ENCODE measurements at regions of chr14 and their contacts with region 1.

Region 1: DNA sequence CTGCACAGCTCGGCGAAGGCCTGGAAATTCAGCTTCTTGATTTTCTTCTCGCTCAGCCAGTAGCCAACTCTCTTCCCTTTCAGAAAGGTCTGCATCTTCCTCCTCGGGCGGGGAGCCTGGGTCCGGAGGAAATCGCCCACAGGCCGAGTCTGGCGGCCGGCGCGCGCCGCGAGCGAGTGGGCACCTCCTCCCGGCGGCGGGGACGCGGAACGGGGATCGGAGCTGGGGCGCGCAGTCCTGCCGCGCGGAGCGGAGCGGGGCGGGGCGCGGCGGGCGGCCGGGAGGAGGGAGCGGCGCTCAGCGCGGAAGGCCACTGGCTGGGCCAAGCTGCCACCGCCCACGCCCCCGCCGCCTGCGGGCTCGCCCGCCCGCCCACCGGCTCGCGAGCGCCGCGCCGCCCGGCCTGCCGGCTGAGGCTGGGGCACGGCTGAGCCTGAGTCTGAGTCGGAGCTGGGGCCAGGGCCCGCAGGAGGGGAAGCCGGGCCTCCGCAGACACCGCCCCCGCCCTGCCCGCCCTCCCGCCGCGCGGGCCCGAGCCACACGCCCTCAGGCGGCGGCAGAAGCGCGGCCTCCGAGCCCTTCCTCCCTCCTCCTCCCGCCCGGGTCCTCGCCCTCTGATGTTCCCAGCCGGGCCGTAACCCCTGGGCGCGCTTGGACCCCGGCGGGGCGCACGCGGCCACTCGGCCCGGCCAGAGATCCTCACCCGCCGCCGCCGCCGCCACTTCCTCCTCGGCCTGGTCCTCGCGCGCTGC is 480 bp downstream of the ITPK1 start:
- DNase-seq: peak; percentile 79 to 90 (median 87)
- H3K4me3 ChIP-seq: peak overlapping the region; percentile 70
- H3K4me3 Mint-ChIP-seq: peak overlapping the region; percentile 74 to 93 (median 88)
- H3K27ac ChIP-seq: peak overlapping the region; percentile 51
- H3K27ac Mint-ChIP-seq: peak overlapping the region in 7 of 8 donors; percentile 50 to 93 (median 73)
- H3K4me1 ChIP-seq: peaks cover 32% of the 10 kb centered on the region
- H3K4me1 Mint-ChIP-seq: peaks cover 20 to 38% (median 31%) of the 10 kb centered on the region in 3 donors
- H3K27me3 ChIP-seq: no peaks in the 10 kb centered on the region
- H3K27me3 Mint-ChIP-seq: peaks cover 0 to 3% of the 10 kb centered on the region in 2 donors

Region 2: GRCh38 chr14:93011748-93012321 is 103.4 kb before region 1 on chr14:
- CTCF ChIA-PET with region 1: no interaction called
- POLR2A ChIA-PET with region 1: no interaction called
- DNase-seq: no peak
- H3K4me3 ChIP-seq: no peak overlapping the region
- H3K4me3 Mint-ChIP-seq: no peak overlapping the region
- H3K27ac ChIP-seq: no peak overlapping the region
- H3K27ac Mint-ChIP-seq: peak overlapping the region in 1 of 8 donors; percentile 35
- H3K4me1 ChIP-seq: peaks cover 9% of the 10 kb centered on the region
- H3K4me1 Mint-ChIP-seq: peaks cover 25 to 44% (median 28%) of the 10 kb centered on the region in 3 donors
- H3K27me3 ChIP-seq: no peaks in the 10 kb centered on the region
- H3K27me3 Mint-ChIP-seq: no peaks in the 10 kb centered on the region

Region 3: DNA sequence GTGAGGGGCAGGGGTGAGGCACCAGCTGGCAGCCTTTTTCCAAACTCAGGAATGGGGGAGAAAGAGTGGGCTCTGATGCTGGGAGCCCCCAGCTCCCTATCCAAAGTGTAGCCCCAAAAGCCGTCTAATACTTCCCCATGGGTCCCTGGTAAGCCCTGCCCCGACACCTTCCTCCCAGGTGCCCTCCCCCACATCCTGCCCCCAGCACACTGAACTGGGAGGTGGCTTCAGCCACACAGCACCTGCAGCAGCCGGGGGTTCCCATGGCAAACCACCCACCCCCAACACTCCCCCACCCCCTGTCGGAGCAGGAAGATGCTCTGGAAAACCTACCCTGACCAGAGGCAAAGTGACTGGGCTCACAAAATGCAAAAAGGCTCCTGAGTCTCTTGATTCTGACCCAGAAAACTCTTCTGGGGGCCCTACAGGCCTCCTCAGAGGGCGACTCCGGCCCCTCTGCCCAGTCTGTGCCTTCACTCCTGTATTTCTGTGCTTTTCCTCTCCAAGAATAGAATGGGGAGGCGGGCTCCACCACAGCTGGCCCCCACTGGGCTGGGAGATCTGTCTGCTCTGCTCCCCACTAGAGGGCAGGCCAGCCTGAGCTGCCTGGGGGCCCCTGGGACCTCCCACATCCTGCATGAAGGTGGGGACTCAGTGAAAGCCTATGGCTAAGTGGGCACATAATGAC is 81.1 kb before region 1 on chr14:
- CTCF ChIA-PET with region 1: interaction called, 29 read pairs
- POLR2A ChIA-PET with region 1: interaction called, 4 read pairs
- DNase-seq: peak; percentile 20 to 72 (median 42)
- H3K4me3 ChIP-seq: no peak overlapping the region
- H3K4me3 Mint-ChIP-seq: peak overlapping the region; percentile 55 to 74 (median 69)
- H3K27ac ChIP-seq: no peak overlapping the region
- H3K27ac Mint-ChIP-seq: peak overlapping the region; percentile 69 to 95 (median 88)
- H3K4me1 ChIP-seq: peaks cover 25% of the 10 kb centered on the region
- H3K4me1 Mint-ChIP-seq: peaks cover 39 to 54% (median 43%) of the 10 kb centered on the region in 3 donors
- H3K27me3 ChIP-seq: no peaks in the 10 kb centered on the region
- H3K27me3 Mint-ChIP-seq: no peaks in the 10 kb centered on the region

Region 4: GRCh38 chr14:93086441-93087055 is 28.7 kb before region 1 on chr14:
- CTCF ChIA-PET with region 1: interaction called, 16 read pairs
- POLR2A ChIA-PET with region 1: no interaction called
- DNase-seq: no peak
- H3K4me3 ChIP-seq: no peak overlapping the region
- H3K4me3 Mint-ChIP-seq: no peak overlapping the region
- H3K27ac ChIP-seq: no peak overlapping the region
- H3K27ac Mint-ChIP-seq: peak overlapping the region; percentile 39 to 97 (median 83)
- H3K4me1 ChIP-seq: peaks cover 18% of the 10 kb centered on the region
- H3K4me1 Mint-ChIP-seq: peaks cover 53 to 91% (median 67%) of the 10 kb centered on the region in 3 donors
- H3K27me3 ChIP-seq: no peaks in the 10 kb centered on the region
- H3K27me3 Mint-ChIP-seq: no peaks in the 10 kb centered on the region

Region 5: DNA sequence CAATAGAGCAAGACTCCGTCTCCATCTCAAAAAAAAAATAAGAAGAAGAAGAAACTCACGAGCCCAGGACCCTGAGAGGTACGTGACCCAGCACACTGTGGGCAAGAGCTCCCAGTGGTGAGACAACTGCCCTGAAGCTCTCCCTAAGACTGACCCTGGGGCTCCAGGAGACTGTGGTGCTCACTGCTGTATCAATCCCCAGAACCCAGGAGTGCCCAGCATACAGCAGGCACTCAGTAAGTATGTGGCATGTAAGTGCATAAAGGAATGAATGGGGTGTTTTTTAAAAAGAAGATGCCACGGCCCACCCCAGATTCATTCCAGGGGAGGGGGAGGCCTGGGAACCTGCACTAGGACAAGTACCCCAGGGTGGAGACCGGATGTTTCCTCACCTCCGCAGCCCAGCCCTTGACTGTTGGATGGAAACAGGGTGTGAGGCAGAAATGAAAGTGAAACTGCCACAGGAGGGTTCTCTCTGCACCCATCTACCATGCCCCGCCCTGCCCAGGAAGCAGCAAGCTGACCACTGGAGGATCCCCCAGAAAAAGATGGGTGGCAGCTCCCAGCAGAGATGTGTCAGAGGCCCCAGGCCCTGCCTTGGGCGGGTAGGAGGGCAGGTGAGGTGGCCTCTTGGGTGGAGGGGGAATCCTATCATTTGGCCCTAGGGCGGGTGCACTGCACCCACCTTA is 11.7 kb before region 1 on chr14:
- CTCF ChIA-PET with region 1: interaction called, 62 read pairs
- POLR2A ChIA-PET with region 1: interaction called, 5 read pairs
- DNase-seq: peak; percentile 44 to 82 (median 64)
- H3K4me3 ChIP-seq: peak overlapping the region; percentile 69
- H3K4me3 Mint-ChIP-seq: peak overlapping the region; percentile 55 to 92 (median 87)
- H3K27ac ChIP-seq: peak overlapping the region; percentile 74
- H3K27ac Mint-ChIP-seq: peak overlapping the region; percentile 57 to 99 (median 94)
- H3K4me1 ChIP-seq: peaks cover 17% of the 10 kb centered on the region
- H3K4me1 Mint-ChIP-seq: peaks cover 38 to 56% (median 39%) of the 10 kb centered on the region in 3 donors
- H3K27me3 ChIP-seq: no peaks in the 10 kb centered on the region
- H3K27me3 Mint-ChIP-seq: no peaks in the 10 kb centered on the region

Region 6: GRCh38 chr14:93137864-93138263 is 22.6 kb after region 1 on chr14:
- CTCF ChIA-PET with region 1: interaction called, 81 read pairs
- POLR2A ChIA-PET with region 1: interaction called, 6 read pairs
- DNase-seq: no peak
- H3K4me3 ChIP-seq: no peak overlapping the region
- H3K4me3 Mint-ChIP-seq: no peak overlapping the region
- H3K27ac ChIP-seq: no peak overlapping the region
- H3K27ac Mint-ChIP-seq: no peak overlapping the region
- H3K4me1 ChIP-seq: no peaks in the 10 kb centered on the region
- H3K4me1 Mint-ChIP-seq: peaks cover 2 to 5% (median 5%) of the 10 kb centered on the region in 3 donors
- H3K27me3 ChIP-seq: no peaks in the 10 kb centered on the region
- H3K27me3 Mint-ChIP-seq: no peaks in the 10 kb centered on the region

Region 7: DNA sequence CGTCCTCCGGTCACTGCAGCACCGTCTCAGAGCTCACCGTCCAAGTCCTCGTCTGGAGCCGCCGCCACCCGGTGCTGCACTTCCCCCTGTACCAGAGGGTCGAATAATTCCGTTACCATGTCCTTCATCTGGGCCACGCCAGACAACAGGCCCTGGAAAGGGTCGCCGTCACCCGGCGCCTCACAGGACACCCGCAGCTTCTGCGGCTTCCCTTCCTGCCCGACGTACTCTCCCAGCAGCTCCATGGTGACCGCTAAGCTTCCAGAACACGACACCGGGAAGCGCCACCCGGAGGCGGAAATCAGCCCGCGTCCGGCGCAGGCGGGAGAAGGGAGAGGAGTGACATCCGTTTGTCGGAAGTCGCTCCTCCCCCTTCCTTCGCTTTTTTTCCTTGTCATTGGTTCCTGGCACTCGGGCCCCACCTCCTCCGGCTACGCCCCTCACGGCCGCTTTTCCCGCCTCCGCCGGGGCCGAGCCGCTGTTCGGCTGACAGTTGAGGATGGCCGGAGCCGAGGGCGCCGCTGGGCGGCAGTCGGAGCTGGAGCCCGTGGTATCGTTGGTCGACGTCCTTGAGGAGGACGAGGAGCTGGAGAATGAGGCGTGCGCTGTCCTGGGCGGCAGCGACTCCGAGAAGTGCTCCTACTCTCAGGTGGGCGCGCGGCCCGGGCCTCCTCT is 91.7 kb after region 1 on chr14 and contains the starts of genes GON7 and UBR7:
- CTCF ChIA-PET with region 1: interaction called, 23 read pairs
- POLR2A ChIA-PET with region 1: interaction called, 3 read pairs
- DNase-seq: peak; percentile 84 to 91 (median 85)
- H3K4me3 ChIP-seq: peak within 1 kb of the TSS; percentile 96
- H3K4me3 Mint-ChIP-seq: peak within 1 kb of the TSS; percentile 95 to 100 (median 98)
- H3K27ac ChIP-seq: peak within 1 kb of the TSS; percentile 78
- H3K27ac Mint-ChIP-seq: peak within 1 kb of the TSS; percentile 88 to 99 (median 96)
- H3K4me1 ChIP-seq: peaks cover 22% of the 10 kb centered on the region
- H3K4me1 Mint-ChIP-seq: peaks cover 42 to 60% (median 59%) of the 10 kb centered on the region in 3 donors
- H3K27me3 ChIP-seq: no peaks in the 10 kb centered on the region
- H3K27me3 Mint-ChIP-seq: no peaks in the 10 kb centered on the region
- total RNA-seq, gene GON7: 19.7 to 19.8 TPM
- total RNA-seq, gene UBR7: 39.4 to 42.3 TPM